ENCODE measurements at regions of chr6 and their contacts with region 1.

Region 1: DNA sequence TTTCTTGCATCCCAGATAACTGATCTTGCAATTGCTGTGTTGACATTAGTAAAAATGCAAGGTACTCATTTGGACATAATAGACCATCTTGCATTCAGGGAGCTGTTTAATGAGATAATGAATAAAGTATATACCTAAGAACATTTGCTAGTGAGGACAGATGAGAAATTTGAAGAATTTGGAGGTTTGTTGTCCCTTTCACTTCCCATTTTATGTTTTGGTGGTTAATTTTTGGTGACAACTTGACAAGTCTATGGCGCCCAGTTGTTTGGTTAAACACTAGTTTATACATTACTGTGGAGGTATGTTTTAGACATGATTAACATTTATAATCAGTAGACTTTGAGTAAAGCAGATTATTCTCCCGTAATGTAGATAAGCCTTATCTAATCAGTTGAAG is 300.2 kb upstream of the SYNCRIP start:
- DNase-seq: no peak
- ATAC-seq: no peak
- H3K4me3 ChIP-seq: no peak overlapping the region
- H3K27ac ChIP-seq: no peak overlapping the region
- H3K4me1 ChIP-seq: no peaks in the 10 kb centered on the region
- H3K27me3 ChIP-seq: no peaks in the 10 kb centered on the region
- CTCF ChIP-seq: no peak

Region 2: DNA sequence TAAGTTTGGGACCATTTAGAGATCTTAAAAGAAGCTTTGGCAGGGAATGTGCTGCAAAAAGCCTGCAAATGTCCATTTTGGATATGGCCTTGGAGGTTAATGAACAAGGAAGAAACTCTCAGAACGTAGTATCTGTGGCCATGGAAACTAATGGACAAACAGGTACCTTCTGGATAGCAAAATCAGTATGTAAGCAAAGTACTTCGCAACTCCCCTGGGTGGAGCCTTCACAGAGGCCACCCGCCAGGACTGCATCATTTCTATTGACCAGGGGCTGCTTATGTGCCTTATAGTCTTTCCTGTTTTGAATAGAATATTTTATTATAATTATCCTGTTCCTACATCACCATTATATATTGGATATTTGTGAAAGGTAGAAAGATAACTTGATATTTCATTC is 210.7 kb after region 1 on chr6:
- intact Hi-C with region 1: no loop called
- DNase-seq: no peak
- ATAC-seq: no peak
- H3K4me3 ChIP-seq: no peak overlapping the region
- H3K27ac ChIP-seq: no peak overlapping the region
- H3K4me1 ChIP-seq: no peaks in the 10 kb centered on the region
- H3K27me3 ChIP-seq: no peaks in the 10 kb centered on the region
- CTCF ChIP-seq: no peak

Region 3: DNA sequence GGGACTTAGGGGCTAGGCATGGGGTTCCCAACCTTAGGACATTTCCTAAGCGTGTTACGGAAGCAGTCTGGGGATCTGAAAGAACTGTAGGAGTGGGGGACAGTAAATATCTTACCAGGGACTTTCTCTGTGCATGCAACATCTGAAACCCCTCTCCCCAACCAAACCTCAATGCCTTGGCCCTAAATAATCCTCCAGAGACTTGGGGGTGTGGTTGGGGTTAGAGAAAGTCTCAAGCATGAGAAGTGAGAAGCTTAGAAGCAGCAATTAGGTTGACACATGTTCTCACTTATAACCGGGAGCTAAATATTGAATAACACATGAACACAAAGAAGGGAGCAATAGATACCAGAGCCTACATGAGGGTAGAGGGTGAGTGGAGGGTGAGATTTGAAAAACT is 1069.2 kb after region 1 on chr6:
- intact Hi-C with region 1: loop called in 1 of 2 experiments (anchors 5 kb)
- DNase-seq: no peak
- ATAC-seq: no peak
- H3K4me3 ChIP-seq: no peak overlapping the region
- H3K27ac ChIP-seq: no peak overlapping the region
- H3K4me1 ChIP-seq: no peaks in the 10 kb centered on the region
- H3K27me3 ChIP-seq: no peaks in the 10 kb centered on the region
- CTCF ChIP-seq: no peak

Measured in psoas muscle (tissue), 8 donors.